B cell (primary cell): ENCODE measurements at regions of chr12 and their contacts with region 1.

Region 1: GRCh38 chr12:56333679-56334489 is at the start of gene PAN2:
- DNase-seq: peak; percentile 98
- ATAC-seq: peak; percentile 90
- H3K4me3 ChIP-seq: peak within 1 kb of the TSS; percentile 63 to 88 (median 80)
- H3K4me3 Mint-ChIP-seq: peak within 1 kb of the TSS; percentile 99
- H3K27ac ChIP-seq: peak within 1 kb of the TSS; percentile 94 to 100
- H3K27ac Mint-ChIP-seq: peak within 1 kb of the TSS; percentile 100
- H3K4me1 ChIP-seq: peaks cover 35 to 44% of the 10 kb centered on the region in 2 donors
- H3K4me1 Mint-ChIP-seq: peaks cover 52% of the 10 kb centered on the region
- H3K27me3 ChIP-seq: no peaks in the 10 kb centered on the region
- H3K27me3 Mint-ChIP-seq: no peaks in the 10 kb centered on the region
- CTCF ChIP-seq: peak; percentile 65
- total RNA-seq, gene PAN2: 216 and 230 TPM in 2 replicates

Region 2: DNA sequence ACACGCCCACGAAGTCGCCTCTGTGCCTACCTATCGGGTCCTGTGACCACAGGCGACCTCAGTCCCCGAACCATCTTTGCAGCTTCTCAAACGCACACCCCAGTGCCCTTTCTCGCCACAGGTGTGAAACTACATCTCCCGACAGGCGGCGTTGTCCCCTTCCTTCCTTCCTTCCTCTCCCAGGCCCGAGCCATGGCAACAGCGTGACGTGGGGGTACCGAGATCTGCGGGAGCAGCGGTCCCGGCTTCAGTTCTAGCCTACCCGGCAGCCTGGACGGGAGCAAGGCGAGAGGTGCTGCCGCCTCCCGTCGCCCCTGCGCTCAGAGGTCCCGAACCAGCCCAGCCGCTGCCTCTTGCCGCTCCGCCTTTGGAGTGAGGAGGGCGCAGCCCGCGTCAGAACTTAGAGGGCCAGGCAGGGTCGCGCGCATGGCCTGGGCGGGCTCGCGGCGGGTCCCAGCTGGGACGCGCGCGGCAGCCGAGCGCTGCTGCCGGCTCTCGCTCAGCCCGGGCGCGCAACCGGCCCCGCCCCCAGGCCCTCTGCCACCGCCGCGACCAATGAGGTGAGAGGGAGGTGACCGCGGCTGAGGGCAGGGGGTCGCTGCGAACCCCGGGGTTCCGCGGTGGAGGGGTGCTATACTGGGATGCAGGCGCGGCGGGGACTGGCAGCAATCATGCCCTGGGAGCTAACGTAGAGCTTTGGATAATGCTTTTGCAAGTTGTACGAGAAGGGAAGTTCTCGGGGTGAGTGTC is 67.0 kb before region 1 on chr12 and contains the start of gene COQ10A:
- CTCF ChIA-PET with region 1: no interaction called
- POLR2A ChIA-PET with region 1: no interaction called
- intact Hi-C with region 1: loop called (anchors 2 kb)
- DNase-seq: peak; percentile 94
- ATAC-seq: peak; percentile 89
- H3K4me3 ChIP-seq: peak within 1 kb of the TSS; percentile 65 to 86 (median 75)
- H3K4me3 Mint-ChIP-seq: peak within 1 kb of the TSS; percentile 91
- H3K27ac ChIP-seq: peak within 1 kb of the TSS; percentile 94
- H3K27ac Mint-ChIP-seq: peak within 1 kb of the TSS; percentile 95
- H3K4me1 ChIP-seq: peaks cover 10 to 15% of the 10 kb centered on the region in 2 donors
- H3K4me1 Mint-ChIP-seq: peaks cover 20% of the 10 kb centered on the region
- H3K27me3 ChIP-seq: no peaks in the 10 kb centered on the region
- H3K27me3 Mint-ChIP-seq: no peaks in the 10 kb centered on the region
- CTCF ChIP-seq: peak; percentile 72
- total RNA-seq, gene COQ10A: 73.5 and 76.3 TPM in 2 replicates

Region 3: GRCh38 chr12:56315622-56316473 is 18.0 kb before region 1 on chr12 and contains the start of gene CNPY2:
- CTCF ChIA-PET with region 1: interaction called, 27 read pairs
- POLR2A ChIA-PET with region 1: interaction called, 12 read pairs
- intact Hi-C with region 1: loop called (anchors 1 kb)
- DNase-seq: peak; percentile 99
- ATAC-seq: peak; percentile 86
- H3K4me3 ChIP-seq: peak within 1 kb of the TSS; percentile 78 to 94 (median 91)
- H3K4me3 Mint-ChIP-seq: peak within 1 kb of the TSS; percentile 99
- H3K27ac ChIP-seq: peak within 1 kb of the TSS; percentile 67 to 90
- H3K27ac Mint-ChIP-seq: peak within 1 kb of the TSS; percentile 99
- H3K4me1 ChIP-seq: peaks cover 12 to 15% of the 10 kb centered on the region in 2 donors
- H3K4me1 Mint-ChIP-seq: peaks cover 10% of the 10 kb centered on the region
- H3K27me3 ChIP-seq: no peaks in the 10 kb centered on the region
- H3K27me3 Mint-ChIP-seq: no peaks in the 10 kb centered on the region
- CTCF ChIP-seq: no peak
- total RNA-seq, gene CNPY2: 89.0 and 91.2 TPM in 2 replicates

Region 4: DNA sequence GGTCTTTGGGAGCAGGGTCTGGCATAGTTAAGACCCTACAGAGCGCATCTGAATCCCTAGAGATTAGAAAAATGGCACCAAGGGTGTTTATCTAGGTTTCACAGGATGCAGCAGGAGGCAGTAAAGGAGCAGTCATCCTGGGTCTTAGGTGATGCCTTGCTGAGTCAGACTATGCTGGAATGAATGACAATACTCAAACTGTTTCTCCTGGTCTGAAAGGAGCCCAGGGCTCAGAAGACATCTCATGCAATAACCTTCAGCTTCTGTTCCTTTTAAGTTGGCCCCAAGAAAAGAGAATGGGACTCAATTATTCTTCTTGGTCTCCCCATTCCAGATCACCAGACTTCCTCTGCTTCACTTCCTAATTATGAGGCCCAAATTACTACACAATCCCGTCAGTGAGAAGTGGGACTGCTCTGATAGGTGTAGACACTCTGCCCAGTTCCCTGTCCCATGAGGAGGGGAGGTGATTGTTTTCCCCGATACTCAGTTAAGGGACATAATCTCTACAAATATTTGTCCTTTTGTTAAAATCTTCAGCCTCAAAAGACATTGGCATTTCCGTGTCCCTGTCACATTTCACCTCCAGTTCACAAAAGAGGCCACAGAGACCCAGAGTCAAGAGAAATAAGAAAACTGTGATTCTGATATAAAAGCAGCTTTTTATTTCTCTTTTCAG is 43.6 kb after region 1 on chr12:
- CTCF ChIA-PET with region 1: interaction called, 6 read pairs
- POLR2A ChIA-PET with region 1: interaction called, 5 read pairs
- intact Hi-C with region 1: loop called (anchors 2 kb)
- DNase-seq: no peak
- ATAC-seq: no peak
- H3K4me3 ChIP-seq: no peak overlapping the region
- H3K4me3 Mint-ChIP-seq: peak overlapping the region; percentile 76
- H3K27ac ChIP-seq: peak overlapping the region; percentile 75 to 80
- H3K27ac Mint-ChIP-seq: peak overlapping the region; percentile 96
- H3K4me1 ChIP-seq: peaks cover 49 to 64% of the 10 kb centered on the region in 2 donors
- H3K4me1 Mint-ChIP-seq: peaks cover 47% of the 10 kb centered on the region
- H3K27me3 ChIP-seq: no peaks in the 10 kb centered on the region
- H3K27me3 Mint-ChIP-seq: no peaks in the 10 kb centered on the region
- CTCF ChIP-seq: no peak

Region 5: GRCh38 chr12:56448860-56449621 is 115.2 kb after region 1 on chr12 and contains the start of gene TIMELESS:
- CTCF ChIA-PET with region 1: interaction called, 4 read pairs
- POLR2A ChIA-PET with region 1: interaction called, 6 read pairs
- intact Hi-C with region 1: loop called (anchors 1 kb)
- DNase-seq: peak; percentile 95
- ATAC-seq: peak; percentile 96
- H3K4me3 ChIP-seq: peak within 1 kb of the TSS; percentile 69 to 98 (median 83)
- H3K4me3 Mint-ChIP-seq: peak within 1 kb of the TSS; percentile 90
- H3K27ac ChIP-seq: peak within 1 kb of the TSS; percentile 53 to 85
- H3K27ac Mint-ChIP-seq: peak within 1 kb of the TSS; percentile 92
- H3K4me1 ChIP-seq: peaks cover 10 to 12% of the 10 kb centered on the region in 2 donors
- H3K4me1 Mint-ChIP-seq: peaks cover 23% of the 10 kb centered on the region
- H3K27me3 ChIP-seq: no peaks in the 10 kb centered on the region
- H3K27me3 Mint-ChIP-seq: no peaks in the 10 kb centered on the region
- CTCF ChIP-seq: no peak
- total RNA-seq, gene TIMELESS: 44.4 and 46.6 TPM in 2 replicates